Endothelial cell of umbilical vein (primary cell): ENCODE measurements at regions of chr16 and their contacts with region 1.

Region 1: DNA sequence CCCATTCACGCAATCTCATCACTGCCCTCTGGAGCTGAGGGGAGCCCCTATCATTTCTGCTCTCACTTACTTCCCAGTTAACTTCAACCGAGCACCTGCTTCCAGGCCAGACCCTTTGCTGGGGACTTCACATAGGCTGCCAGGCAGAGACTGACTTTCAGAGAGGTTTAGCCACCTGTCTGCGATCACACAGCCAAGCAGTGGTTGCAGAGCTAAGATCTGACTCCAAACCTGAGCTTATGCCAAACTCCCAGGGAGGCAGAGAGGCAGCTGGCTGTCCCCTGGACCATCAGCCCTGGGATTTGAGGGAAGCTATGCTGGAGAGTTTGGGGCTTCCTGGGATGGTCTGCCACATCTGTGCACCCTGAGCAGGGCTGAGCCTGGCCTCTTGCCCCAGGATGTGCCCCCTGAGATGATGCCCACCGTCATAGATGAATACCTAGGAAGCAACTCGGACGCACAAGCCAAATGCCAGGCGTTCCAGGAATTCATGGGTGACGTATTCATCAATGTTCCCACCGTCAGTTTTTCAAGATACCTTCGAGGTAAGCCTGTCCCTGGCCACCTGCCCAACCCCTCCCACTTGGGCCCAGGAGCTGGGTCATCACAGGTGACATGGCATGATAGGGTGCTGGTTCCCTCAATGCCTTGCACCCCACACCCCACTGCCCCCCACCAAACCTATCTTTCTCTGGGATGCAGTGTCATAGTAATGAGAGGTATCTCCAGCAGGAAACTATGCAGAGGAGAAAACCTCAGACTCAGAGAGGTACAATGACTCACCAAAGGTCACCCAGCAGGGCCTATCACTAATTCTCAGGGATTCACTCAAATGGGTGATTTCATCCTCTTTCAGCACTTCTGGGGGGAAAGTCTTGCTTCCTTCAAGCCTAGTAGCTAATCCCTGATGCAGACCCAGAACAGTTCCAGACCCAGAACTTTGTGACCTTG is 10.0 kb downstream of the CES3 start:
- DNase-seq: no peak
- H3K4me3 ChIP-seq: no peak overlapping the region
- H3K27ac ChIP-seq: no peak overlapping the region
- H3K4me1 ChIP-seq: no peaks in the 10 kb centered on the region
- H3K27me3 ChIP-seq: peaks cover 2 to 3% of the 10 kb centered on the region in 2 experiments
- CTCF ChIP-seq: no peak
- POLR2A ChIP-seq: no peak

Region 2: GRCh38 chr16:66705790-66706505 is 265.1 kb before region 1 on chr16:
- CTCF ChIA-PET with region 1: no interaction called
- POLR2A ChIA-PET with region 1: no interaction called
- dilution Hi-C with region 1: no loop called
- intact Hi-C with region 1: no loop called
- DNase-seq: peak; percentile 24
- H3K4me3 ChIP-seq: no peak overlapping the region
- H3K27ac ChIP-seq: no peak overlapping the region
- H3K4me1 ChIP-seq: no peaks in the 10 kb centered on the region
- H3K27me3 ChIP-seq: peaks cover 2 to 7% of the 10 kb centered on the region in 2 experiments
- CTCF ChIP-seq: no peak
- POLR2A ChIP-seq: no peak

Region 3: GRCh38 chr16:66954097-66954659 is 16.9 kb before region 1 on chr16:
- CTCF ChIA-PET with region 1: interaction called, 10 read pairs
- POLR2A ChIA-PET with region 1: interaction called, 7 read pairs
- dilution Hi-C with region 1: no loop called
- intact Hi-C with region 1: no loop called
- DNase-seq: peak; percentile 78
- H3K4me3 ChIP-seq: no peak overlapping the region
- H3K27ac ChIP-seq: no peak overlapping the region
- H3K4me1 ChIP-seq: no peaks in the 10 kb centered on the region
- H3K27me3 ChIP-seq: peaks cover 3 to 5% of the 10 kb centered on the region in 2 experiments
- CTCF ChIP-seq: peak; percentile 78 to 85
- POLR2A ChIP-seq: no peak